Calu3 (cell line): ENCODE measurements at regions of chr22 and their contacts with region 1.

Region 1: GRCh38 chr22:24466716-24467328 is 28.3 kb upstream of the UPB1 start:
- DNase-seq: peak; percentile 49
- H3K4me3 Mint-ChIP-seq: peak overlapping the region; percentile 32
- H3K27ac Mint-ChIP-seq: peak overlapping the region; percentile 5
- H3K4me1 Mint-ChIP-seq: peaks cover 32% of the 10 kb centered on the region
- H3K27me3 Mint-ChIP-seq: no peaks in the 10 kb centered on the region
- CTCF ChIP-seq: no peak

Region 2: GRCh38 chr22:24482575-24482974 is 15.8 kb after region 1 on chr22:
- CTCF ChIA-PET with region 1: interaction called, 18 read pairs
- intact Hi-C with region 1: no loop called
- DNase-seq: no peak
- H3K4me3 Mint-ChIP-seq: no peak overlapping the region
- H3K27ac Mint-ChIP-seq: peak overlapping the region; percentile 57
- H3K4me1 Mint-ChIP-seq: peaks cover 65% of the 10 kb centered on the region
- H3K27me3 Mint-ChIP-seq: no peaks in the 10 kb centered on the region
- CTCF ChIP-seq: no peak